CD4-positive, alpha-beta memory T cell (primary cell): ENCODE measurements at regions of chr20 and their contacts with region 1.

Region 1: GRCh38 chr20:3173610-3174441 is 477 bp upstream of the LZTS3 start:
- DNase-seq: peak in 2 of 5 donors; percentile 46 to 90
- H3K4me3 ChIP-seq: peak overlapping the region; percentile 73 to 89
- H3K4me3 Mint-ChIP-seq: peak overlapping the region; percentile 80 to 88 (median 84)
- H3K27ac ChIP-seq: peak overlapping the region; percentile 89
- H3K27ac Mint-ChIP-seq: peak overlapping the region; percentile 52 to 92 (median 87)
- H3K4me1 ChIP-seq: peaks cover 15% of the 10 kb centered on the region
- H3K4me1 Mint-ChIP-seq: peaks cover 4 to 25% (median 11%) of the 10 kb centered on the region in 4 donors
- H3K27me3 ChIP-seq: no peaks in the 10 kb centered on the region
- H3K27me3 Mint-ChIP-seq: peaks cover 6 to 12% of the 10 kb centered on the region in 2 donors

Region 2: DNA sequence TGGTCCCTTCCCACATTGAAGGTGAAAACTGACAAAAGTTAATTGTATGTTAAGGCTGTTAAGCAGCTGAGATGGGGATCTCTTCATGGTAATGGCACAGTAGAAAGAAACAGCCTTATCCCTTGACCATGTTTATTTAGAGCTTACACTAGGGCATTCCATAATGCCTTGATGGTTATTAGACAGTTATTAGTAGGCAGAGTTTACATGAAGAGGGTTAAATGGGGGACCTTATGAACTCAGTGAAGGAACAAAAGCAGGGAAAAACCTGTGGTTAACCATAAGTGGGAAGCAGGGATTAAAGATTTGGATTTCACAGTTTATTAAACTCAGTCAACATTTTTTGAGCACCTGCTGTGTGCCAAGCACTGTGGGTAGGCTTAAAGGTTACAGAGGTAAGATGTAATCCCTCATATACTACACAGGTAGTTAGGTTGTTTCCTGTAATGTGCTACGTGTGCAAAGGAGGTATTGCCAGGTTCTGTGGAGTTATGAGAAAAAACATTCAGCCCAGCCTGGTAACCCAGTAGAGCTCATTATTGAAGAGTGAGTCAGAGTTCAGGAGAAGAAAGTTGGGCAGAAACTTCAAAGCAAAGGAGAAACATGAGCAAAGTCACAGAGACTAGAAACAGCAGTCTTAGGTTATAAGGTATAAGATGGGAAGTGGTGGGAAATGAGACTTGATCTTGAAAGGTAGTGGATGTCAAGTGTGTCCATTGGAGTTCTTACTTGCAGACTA is 162.7 kb before region 1 on chr20:
- CTCF ChIA-PET with region 1: no interaction called
- POLR2A ChIA-PET with region 1: no interaction called
- intact Hi-C with region 1: no loop called
- DNase-seq: no peak
- H3K4me3 ChIP-seq: no peak overlapping the region
- H3K4me3 Mint-ChIP-seq: no peak overlapping the region
- H3K27ac ChIP-seq: no peak overlapping the region
- H3K27ac Mint-ChIP-seq: peak overlapping the region in 4 of 7 donors; percentile 10 to 77 (median 19)
- H3K4me1 ChIP-seq: no peaks in the 10 kb centered on the region
- H3K4me1 Mint-ChIP-seq: peaks cover 0 to 6% (median 3%) of the 10 kb centered on the region in 4 donors
- H3K27me3 ChIP-seq: no peaks in the 10 kb centered on the region
- H3K27me3 Mint-ChIP-seq: no peaks in the 10 kb centered on the region

Region 3: GRCh38 chr20:3059489-3059888 is 114.3 kb before region 1 on chr20:
- CTCF ChIA-PET with region 1: no interaction called
- POLR2A ChIA-PET with region 1: no interaction called
- intact Hi-C with region 1: no loop called
- DNase-seq: no peak
- H3K4me3 ChIP-seq: no peak overlapping the region
- H3K4me3 Mint-ChIP-seq: no peak overlapping the region
- H3K27ac ChIP-seq: no peak overlapping the region
- H3K27ac Mint-ChIP-seq: peak overlapping the region in 1 of 7 donors; percentile 60
- H3K4me1 ChIP-seq: no peaks in the 10 kb centered on the region
- H3K4me1 Mint-ChIP-seq: peaks cover 3 to 8% (median 6%) of the 10 kb centered on the region in 4 donors
- H3K27me3 ChIP-seq: no peaks in the 10 kb centered on the region
- H3K27me3 Mint-ChIP-seq: no peaks in the 10 kb centered on the region

Region 4: DNA sequence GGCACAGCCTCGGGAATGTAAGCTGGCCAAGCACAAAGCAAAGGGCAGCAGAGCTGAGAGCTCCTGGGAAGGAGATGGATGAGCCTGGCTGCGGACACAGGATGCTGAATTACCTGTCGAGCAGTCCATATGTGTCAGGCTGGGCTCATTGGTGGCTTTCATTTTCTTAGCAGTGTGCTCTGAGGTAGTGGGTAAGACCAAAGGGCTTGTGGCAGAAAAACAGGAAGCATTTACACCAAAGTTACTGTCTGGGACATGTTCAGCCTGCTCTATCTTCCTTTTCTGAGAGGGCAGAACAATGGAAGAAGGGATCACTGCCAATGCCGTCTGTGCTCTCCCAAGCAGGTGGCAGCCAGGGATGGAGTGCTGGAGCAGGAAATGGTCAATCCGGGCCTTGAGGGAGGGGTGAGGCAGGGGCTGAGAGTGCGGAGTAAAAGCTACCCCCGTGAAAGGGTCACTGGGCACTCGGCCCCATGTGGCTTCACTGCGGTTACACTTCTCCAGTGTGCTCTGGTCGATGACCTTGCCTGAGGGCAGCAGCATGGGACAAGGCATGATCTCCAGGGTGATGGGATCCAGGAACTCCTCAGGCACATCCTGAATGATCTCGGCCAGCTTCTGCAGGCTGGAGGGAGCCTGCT is 52.4 kb before region 1 on chr20:
- CTCF ChIA-PET with region 1: no interaction called
- POLR2A ChIA-PET with region 1: no interaction called
- intact Hi-C with region 1: loop called (anchors 5 kb)
- DNase-seq: peak in 4 of 5 donors; percentile 32 to 48 (median 45)
- H3K4me3 ChIP-seq: peak overlapping the region; percentile 2 to 17
- H3K4me3 Mint-ChIP-seq: peak overlapping the region; percentile 61 to 80 (median 69)
- H3K27ac ChIP-seq: peak overlapping the region; percentile 18
- H3K27ac Mint-ChIP-seq: peak overlapping the region; percentile 80 to 98 (median 96)
- H3K4me1 ChIP-seq: peaks cover 35% of the 10 kb centered on the region
- H3K4me1 Mint-ChIP-seq: peaks cover 22 to 55% (median 35%) of the 10 kb centered on the region in 4 donors
- H3K27me3 ChIP-seq: no peaks in the 10 kb centered on the region
- H3K27me3 Mint-ChIP-seq: no peaks in the 10 kb centered on the region

Region 5: DNA sequence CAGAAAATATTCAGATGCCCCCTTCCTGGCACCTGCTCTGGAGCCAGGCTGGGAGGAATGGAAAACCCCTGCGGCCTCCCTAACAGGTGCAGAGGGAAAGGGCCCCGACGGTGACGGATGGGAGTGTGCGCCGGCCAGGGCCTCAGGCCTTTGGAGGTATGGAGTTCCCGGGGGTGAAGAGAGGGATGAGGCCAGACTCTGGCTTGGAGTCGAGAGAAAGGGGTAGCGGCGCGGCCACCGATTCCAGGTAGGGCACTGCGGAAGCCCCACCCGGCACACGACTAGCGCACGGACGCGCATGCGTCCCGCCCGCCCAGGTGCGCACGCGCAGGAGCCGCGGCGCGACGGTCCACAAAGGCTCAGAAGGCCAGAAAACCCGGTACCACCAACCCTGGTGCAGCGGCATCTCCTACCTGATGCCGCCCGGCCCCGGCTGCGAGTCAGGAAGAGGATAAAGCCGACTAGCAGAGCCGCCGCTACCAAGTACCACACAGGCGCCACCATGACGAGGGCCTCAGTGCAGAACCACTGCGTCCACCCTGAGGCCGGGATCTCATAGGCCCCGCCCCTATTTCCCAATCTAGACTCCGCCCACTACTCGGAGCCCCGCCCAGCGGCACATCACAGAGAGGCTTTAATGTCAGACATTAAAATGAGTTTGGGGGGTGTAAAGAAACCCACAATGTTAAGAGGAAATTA is 30.4 kb after region 1 on chr20 and contains the start of gene DDRGK1:
- CTCF ChIA-PET with region 1: no interaction called
- POLR2A ChIA-PET with region 1: interaction called, 3 read pairs
- intact Hi-C with region 1: loop called (anchors 1 kb)
- DNase-seq: peak; percentile 86 to 92 (median 91)
- H3K4me3 ChIP-seq: peak within 1 kb of the TSS; percentile 94 to 99
- H3K4me3 Mint-ChIP-seq: peak within 1 kb of the TSS; percentile 93 to 98 (median 97)
- H3K27ac ChIP-seq: peak within 1 kb of the TSS; percentile 91
- H3K27ac Mint-ChIP-seq: peak within 1 kb of the TSS; percentile 96 to 97 (median 97)
- H3K4me1 ChIP-seq: peaks cover 31% of the 10 kb centered on the region
- H3K4me1 Mint-ChIP-seq: peaks cover 9 to 38% (median 24%) of the 10 kb centered on the region in 4 donors
- H3K27me3 ChIP-seq: no peaks in the 10 kb centered on the region
- H3K27me3 Mint-ChIP-seq: no peaks in the 10 kb centered on the region
- total RNA-seq, gene DDRGK1: 55.6 to 61.0 TPM

Region 6: DNA sequence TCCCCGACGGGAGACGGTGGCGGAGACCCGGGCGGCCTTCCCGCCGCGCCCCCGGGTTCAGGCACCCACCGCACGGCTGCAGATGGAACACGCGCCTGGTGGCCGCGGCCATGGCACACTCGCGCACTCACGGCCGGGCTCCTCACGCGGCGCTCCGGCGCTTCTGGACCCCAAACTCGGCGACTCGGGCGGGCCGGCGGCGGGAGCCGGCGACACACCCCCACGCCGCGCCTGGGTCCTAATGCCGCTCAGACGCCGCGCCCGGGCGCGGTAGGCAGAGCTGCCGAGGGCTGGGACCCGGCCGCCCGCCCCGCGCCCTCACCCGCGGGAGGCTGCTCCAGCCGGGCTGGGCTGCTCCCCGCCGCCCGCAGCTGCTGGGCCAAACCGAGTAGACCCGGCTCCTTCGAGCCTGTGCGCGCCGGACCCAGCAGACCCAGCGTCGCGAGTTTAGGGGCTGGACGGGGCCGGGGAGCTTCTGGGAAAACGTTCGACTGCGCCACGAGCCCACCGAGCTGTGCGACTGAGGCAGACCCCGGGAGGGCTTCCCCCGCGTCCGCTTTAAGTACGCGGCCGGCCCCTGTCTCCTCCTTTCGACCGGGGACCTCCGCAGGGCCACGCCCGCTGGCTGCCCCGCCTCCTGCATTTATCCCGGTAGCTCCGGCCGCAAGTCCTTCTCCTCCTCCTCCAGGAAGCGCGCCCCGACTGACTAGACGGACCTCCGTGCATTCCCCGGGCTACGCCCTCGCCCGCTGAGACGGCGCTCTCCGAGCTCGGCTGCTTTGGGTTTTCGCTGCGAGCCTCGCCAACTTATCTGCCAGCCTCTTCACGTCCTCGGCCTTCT is 65.4 kb after region 1 on chr20 and contains the start of gene SLC4A11:
- CTCF ChIA-PET with region 1: no interaction called
- POLR2A ChIA-PET with region 1: no interaction called
- intact Hi-C with region 1: loop called (anchors 2 kb)
- DNase-seq: peak in 3 of 5 donors; percentile 18 to 32 (median 29)
- H3K4me3 ChIP-seq: peak within 1 kb of the TSS; percentile 29 to 59
- H3K4me3 Mint-ChIP-seq: peak within 1 kb of the TSS; percentile 86 to 95 (median 92)
- H3K27ac ChIP-seq: no peak within 1 kb of the TSS
- H3K27ac Mint-ChIP-seq: peak within 1 kb of the TSS in 4 of 7 donors; percentile 30 to 79 (median 54)
- H3K4me1 ChIP-seq: peaks cover 14% of the 10 kb centered on the region
- H3K4me1 Mint-ChIP-seq: peaks cover 2 to 23% (median 9%) of the 10 kb centered on the region in 4 donors
- H3K27me3 ChIP-seq: peaks cover 34% of the 10 kb centered on the region
- H3K27me3 Mint-ChIP-seq: peaks cover 15 to 32% of the 10 kb centered on the region in 2 donors
- total RNA-seq, gene SLC4A11: 0.35 to 0.83 TPM